CD4-positive, alpha-beta memory T cell (primary cell): ENCODE measurements at regions of chr12 and their contacts with region 1.

Region 1: DNA sequence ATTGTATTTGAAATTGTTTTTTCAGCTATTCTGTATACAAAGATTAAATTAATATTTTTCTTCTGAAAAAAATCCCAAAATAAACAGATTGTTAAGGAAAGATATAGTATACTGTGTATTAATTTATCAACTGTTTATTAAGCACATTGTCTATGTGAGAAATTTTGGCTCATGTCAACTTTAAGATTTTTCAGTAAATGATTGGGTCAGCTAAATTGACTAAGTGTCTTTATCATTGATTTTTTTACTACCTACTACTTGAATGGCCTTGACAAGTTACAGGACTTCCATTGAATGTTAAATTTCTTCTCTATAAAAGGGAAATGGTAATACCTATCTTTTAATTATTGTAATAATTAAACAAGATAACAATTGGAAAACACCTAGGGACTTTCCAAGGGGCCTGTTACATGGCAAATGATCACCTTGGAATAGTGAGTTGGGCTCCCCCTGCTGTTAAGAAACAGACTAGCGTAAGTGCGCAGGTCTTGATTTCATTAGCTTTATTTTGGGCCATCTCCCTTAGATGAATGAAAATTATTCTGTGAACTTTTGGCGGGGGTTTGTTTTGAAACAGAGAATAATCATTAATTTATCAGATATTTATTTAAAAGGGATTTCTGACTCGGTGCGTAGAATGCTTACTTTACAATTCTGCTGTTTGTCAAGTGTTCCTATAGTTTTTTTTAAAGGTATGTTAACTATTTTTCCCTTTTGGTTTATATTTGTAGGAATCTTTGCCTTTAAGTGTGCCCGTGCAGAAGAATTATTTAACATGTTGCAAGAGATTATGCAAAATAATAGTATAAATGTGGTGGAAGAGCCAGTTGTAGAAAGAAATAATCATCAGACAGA is 14.5 kb upstream of the CCT2 start:
- DNase-seq: peak; percentile 59 to 76 (median 66)
- H3K4me3 ChIP-seq: no peak overlapping the region
- H3K4me3 Mint-ChIP-seq: no peak overlapping the region
- H3K27ac ChIP-seq: peak overlapping the region; percentile 39
- H3K27ac Mint-ChIP-seq: peak overlapping the region in 5 of 7 donors; percentile 24 to 71 (median 50)
- H3K4me1 ChIP-seq: no peaks in the 10 kb centered on the region
- H3K4me1 Mint-ChIP-seq: peaks cover 0 to 4% (median 2%) of the 10 kb centered on the region in 4 donors
- H3K27me3 ChIP-seq: no peaks in the 10 kb centered on the region
- H3K27me3 Mint-ChIP-seq: no peaks in the 10 kb centered on the region

Region 2: DNA sequence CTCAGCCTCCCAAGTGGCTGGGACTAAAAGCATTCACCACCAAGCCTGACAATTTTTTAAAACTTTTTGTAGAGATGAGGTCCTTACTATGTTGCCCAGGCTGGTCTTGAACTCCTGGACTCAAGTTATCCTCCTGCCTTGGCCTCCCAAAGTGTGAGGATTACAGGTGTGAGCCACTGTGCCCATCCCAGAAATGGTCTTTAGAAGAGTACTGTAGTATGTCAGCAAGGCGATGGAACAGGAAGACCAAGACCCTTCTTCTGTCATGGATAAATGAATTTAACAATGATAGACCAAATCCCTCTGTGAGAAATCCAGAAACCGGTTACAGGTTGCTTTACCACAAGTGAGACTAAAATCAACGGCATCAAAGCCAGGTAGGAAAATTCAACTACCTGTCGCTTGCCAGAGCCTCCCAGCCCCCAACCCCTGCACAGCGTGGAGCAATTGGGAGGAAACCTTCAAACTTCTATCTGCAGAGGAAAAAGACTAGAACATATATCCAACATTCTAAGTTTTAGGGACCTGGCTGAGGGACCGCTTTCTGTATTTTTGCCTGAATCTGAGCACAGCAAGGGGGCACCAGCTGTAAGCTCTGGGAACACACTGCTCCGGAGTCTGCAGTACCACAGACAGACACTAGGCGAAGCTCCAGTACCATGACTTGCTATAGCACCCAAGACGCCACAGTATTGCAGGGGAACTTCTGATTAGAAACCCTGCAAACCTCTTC is 280.1 kb before region 1 on chr12:
- CTCF ChIA-PET with region 1: interaction called, 66 read pairs
- POLR2A ChIA-PET with region 1: interaction called, 5 read pairs
- intact Hi-C with region 1: loop called (anchors 1 kb)
- DNase-seq: peak; percentile 72 to 76 (median 74)
- H3K4me3 ChIP-seq: no peak overlapping the region
- H3K4me3 Mint-ChIP-seq: peak overlapping the region in 1 of 8 donors; percentile 30
- H3K27ac ChIP-seq: no peak overlapping the region
- H3K27ac Mint-ChIP-seq: peak overlapping the region in 1 of 7 donors; percentile 49
- H3K4me1 ChIP-seq: no peaks in the 10 kb centered on the region
- H3K4me1 Mint-ChIP-seq: peaks cover 6 to 9% (median 7%) of the 10 kb centered on the region in 4 donors
- H3K27me3 ChIP-seq: peaks cover 5% of the 10 kb centered on the region
- H3K27me3 Mint-ChIP-seq: peaks cover 25 to 29% of the 10 kb centered on the region in 2 donors

Region 3: GRCh38 chr12:69354556-69355187 is 216.1 kb before region 1 on chr12:
- CTCF ChIA-PET with region 1: interaction called, 146 read pairs
- POLR2A ChIA-PET with region 1: interaction called, 9 read pairs
- intact Hi-C with region 1: loop called (anchors 1 kb)
- DNase-seq: no peak
- H3K4me3 ChIP-seq: no peak overlapping the region
- H3K4me3 Mint-ChIP-seq: no peak overlapping the region
- H3K27ac ChIP-seq: no peak overlapping the region
- H3K27ac Mint-ChIP-seq: peak overlapping the region in 1 of 7 donors; percentile 15
- H3K4me1 ChIP-seq: peaks cover 6% of the 10 kb centered on the region
- H3K4me1 Mint-ChIP-seq: peaks cover 13 to 16% (median 15%) of the 10 kb centered on the region in 4 donors
- H3K27me3 ChIP-seq: no peaks in the 10 kb centered on the region
- H3K27me3 Mint-ChIP-seq: peaks cover 4 to 8% of the 10 kb centered on the region in 2 donors

Region 4: GRCh38 chr12:69385038-69385437 is 185.7 kb before region 1 on chr12:
- CTCF ChIA-PET with region 1: interaction called, 14 read pairs
- POLR2A ChIA-PET with region 1: no interaction called
- intact Hi-C with region 1: no loop called
- DNase-seq: no peak
- H3K4me3 ChIP-seq: no peak overlapping the region
- H3K4me3 Mint-ChIP-seq: no peak overlapping the region
- H3K27ac ChIP-seq: no peak overlapping the region
- H3K27ac Mint-ChIP-seq: no peak overlapping the region
- H3K4me1 ChIP-seq: no peaks in the 10 kb centered on the region
- H3K4me1 Mint-ChIP-seq: peaks cover 4 to 10% (median 6%) of the 10 kb centered on the region in 4 donors
- H3K27me3 ChIP-seq: no peaks in the 10 kb centered on the region
- H3K27me3 Mint-ChIP-seq: no peaks in the 10 kb centered on the region

Region 5: DNA sequence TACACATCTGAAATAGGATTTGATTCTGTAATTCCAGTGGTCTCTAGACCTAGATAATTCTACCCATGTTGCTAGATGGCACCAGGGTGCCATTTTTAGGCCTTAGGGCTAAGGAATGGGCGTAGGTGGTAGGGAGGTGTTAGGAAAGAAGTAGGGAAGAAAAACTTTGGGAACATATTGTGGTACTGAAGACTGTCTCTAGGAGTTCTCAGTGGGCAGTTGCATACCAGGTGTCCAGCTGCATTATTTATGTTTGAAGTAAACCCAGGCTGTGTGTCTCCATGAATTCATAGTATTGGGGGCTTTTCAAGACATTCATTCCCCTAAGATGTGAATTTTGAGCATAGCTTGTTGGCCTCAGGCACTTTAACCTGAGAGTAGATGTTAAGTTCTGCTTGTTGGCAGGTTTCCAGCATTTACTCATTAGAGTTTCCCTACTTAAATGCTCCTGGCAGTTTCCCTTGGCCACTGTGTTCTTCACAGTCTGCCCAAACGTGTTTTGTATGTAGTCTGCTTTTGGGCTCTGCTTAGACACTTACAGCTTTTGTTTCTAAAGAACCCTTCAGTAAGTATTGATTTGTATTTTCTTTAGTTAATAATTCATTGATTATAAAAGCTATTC is 17.0 kb before region 1 on chr12:
- CTCF ChIA-PET with region 1: interaction called, 24 read pairs
- POLR2A ChIA-PET with region 1: no interaction called
- intact Hi-C with region 1: no loop called
- DNase-seq: no peak
- H3K4me3 ChIP-seq: no peak overlapping the region
- H3K4me3 Mint-ChIP-seq: no peak overlapping the region
- H3K27ac ChIP-seq: no peak overlapping the region
- H3K27ac Mint-ChIP-seq: peak overlapping the region in 1 of 7 donors; percentile 4
- H3K4me1 ChIP-seq: no peaks in the 10 kb centered on the region
- H3K4me1 Mint-ChIP-seq: peaks cover 0 to 5% (median 2%) of the 10 kb centered on the region in 4 donors
- H3K27me3 ChIP-seq: no peaks in the 10 kb centered on the region
- H3K27me3 Mint-ChIP-seq: no peaks in the 10 kb centered on the region